ENCODE measurements at regions of chr11 and their contacts with region 1.

Region 1: GRCh38 chr11:73429121-73429750 is 53.0 kb downstream of the RELT start:
- DNase-seq: no peak
- H3K4me3 ChIP-seq: no peak overlapping the region
- H3K4me3 Mint-ChIP-seq: no peak overlapping the region
- H3K27ac ChIP-seq: no peak overlapping the region
- H3K27ac Mint-ChIP-seq: peak overlapping the region in 2 of 7 donors; percentile 3 to 58
- H3K4me1 ChIP-seq: peaks cover 24 to 25% of the 10 kb centered on the region in 2 donors
- H3K4me1 Mint-ChIP-seq: peaks cover 41% of the 10 kb centered on the region
- H3K27me3 ChIP-seq: no peaks in the 10 kb centered on the region
- H3K27me3 Mint-ChIP-seq: no peaks in the 10 kb centered on the region
- CTCF ChIP-seq: no peak

Region 2: GRCh38 chr11:73478738-73479347 is 49.6 kb after region 1 on chr11:
- intact Hi-C with region 1: loop called (anchors 5 to 10 kb)
- DNase-seq: peak in 2 of 3 donors; percentile 9 to 11
- H3K4me3 ChIP-seq: no peak overlapping the region
- H3K4me3 Mint-ChIP-seq: no peak overlapping the region
- H3K27ac ChIP-seq: no peak overlapping the region
- H3K27ac Mint-ChIP-seq: no peak overlapping the region
- H3K4me1 ChIP-seq: peaks cover 10 to 18% of the 10 kb centered on the region in 2 donors
- H3K4me1 Mint-ChIP-seq: peaks cover 21% of the 10 kb centered on the region
- H3K27me3 ChIP-seq: no peaks in the 10 kb centered on the region
- H3K27me3 Mint-ChIP-seq: peaks cover 0 to 2% (median 0%) of the 10 kb centered on the region in 3 donors
- CTCF ChIP-seq: peak; percentile 57

Region 3: DNA sequence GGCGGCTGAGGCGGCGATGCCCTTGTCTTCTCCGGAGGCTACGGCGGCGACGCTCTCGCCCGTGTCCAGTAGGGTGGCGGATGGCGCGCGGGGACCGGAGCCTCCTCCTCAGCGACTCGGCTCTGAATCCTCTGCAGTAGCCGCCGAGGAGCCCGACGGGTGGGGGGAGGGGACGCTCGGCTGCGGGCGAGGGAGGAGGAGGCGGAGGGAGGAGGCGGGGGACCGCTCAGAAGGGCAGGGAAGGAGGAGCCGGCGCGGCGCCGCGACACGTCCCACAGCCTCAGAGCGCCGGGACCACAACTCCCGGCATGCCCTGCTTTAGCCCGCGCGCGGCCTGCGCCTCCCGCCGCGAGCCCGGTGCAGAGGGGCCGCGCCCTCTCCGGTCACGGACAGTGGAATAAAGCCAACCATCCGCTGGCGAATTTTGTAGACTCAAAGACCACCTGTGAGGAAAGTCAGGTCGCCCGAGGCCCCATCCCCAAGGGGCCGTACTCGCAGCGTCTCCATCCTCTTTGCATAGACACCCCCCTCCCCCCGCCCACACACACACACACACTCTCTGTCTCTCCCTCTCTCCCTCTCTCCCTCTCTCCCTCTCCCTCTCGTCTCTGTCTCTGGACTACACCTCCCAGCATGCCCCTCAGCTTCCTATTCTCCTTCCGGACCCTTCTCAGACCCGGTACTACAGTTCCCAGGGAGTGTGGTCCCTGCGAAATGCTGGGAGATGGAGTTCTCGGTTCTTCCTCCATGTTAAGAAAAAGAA is 168.9 kb after region 1 on chr11 and contains the start of gene FAM168A:
- intact Hi-C with region 1: loop called in 1 of 2 experiments (anchors 10 kb)
- DNase-seq: peak; percentile 93 to 97 (median 94)
- H3K4me3 ChIP-seq: peak within 1 kb of the TSS; percentile 86 to 98 (median 97)
- H3K4me3 Mint-ChIP-seq: peak within 1 kb of the TSS; percentile 89 to 93
- H3K27ac ChIP-seq: peak within 1 kb of the TSS; percentile 57 to 88
- H3K27ac Mint-ChIP-seq: peak within 1 kb of the TSS; percentile 80 to 94 (median 92)
- H3K4me1 ChIP-seq: peaks cover 16 to 24% of the 10 kb centered on the region in 2 donors
- H3K4me1 Mint-ChIP-seq: peaks cover 33% of the 10 kb centered on the region
- H3K27me3 ChIP-seq: no peaks in the 10 kb centered on the region
- H3K27me3 Mint-ChIP-seq: peaks cover 0 to 2% (median 0%) of the 10 kb centered on the region in 3 donors
- CTCF ChIP-seq: peak; percentile 38
- polyA plus RNA-seq, gene FAM168A: 1.4 to 13.3 (median 2.1) TPM

Measured in CD14-positive monocyte (primary cell).